Activated B cell treated with CpG ODN at 0.5 μM for 24 hours (primary cell): ENCODE measurements at regions of chrX and their contacts with region 1.

Region 1: DNA sequence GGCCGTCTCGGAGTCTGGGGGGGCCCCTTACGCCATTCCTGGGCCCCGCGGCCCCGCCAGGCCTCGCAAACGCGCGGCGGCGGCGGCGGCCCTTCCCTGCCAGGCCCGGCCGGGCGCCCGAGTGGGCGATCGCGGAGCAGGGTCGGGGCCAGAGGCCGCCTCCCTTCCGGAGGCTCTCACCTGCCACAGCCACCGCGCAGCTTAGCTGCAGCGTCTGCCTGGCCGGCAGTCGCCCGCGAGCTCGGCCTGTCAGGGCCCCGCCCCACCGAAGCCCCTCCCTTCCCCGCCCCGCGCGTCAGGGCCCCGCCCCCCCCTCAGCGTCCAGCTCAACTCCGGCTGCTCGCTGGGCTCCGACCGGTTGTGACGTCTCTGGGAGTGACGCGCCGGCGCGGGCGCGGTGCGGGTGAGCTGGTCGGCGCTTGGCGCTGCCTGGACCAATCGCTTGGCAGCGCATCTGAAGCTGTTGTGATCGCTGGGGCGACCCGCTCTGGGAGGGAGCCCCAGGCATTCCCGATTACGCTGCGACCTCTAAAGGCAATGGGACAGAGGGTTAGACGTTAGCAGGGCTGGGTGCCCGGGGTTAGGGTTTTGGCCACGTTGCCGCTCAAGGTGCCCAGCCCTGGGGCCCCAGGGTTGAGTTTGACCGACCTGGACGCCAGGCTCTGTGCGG is at the start of gene SLC10A3:
- DNase-seq: peak; percentile 77
- ATAC-seq: peak; percentile 82
- H3K4me3 Mint-ChIP-seq: peak within 1 kb of the TSS; percentile 88
- H3K27ac Mint-ChIP-seq: peak within 1 kb of the TSS; percentile 93
- H3K4me1 Mint-ChIP-seq: peaks cover 10% of the 10 kb centered on the region
- H3K27me3 Mint-ChIP-seq: no peaks in the 10 kb centered on the region
- CTCF ChIP-seq: no peak
- total RNA-seq, gene SLC10A3: 13.4 and 17.1 TPM in 2 replicates

Region 2: DNA sequence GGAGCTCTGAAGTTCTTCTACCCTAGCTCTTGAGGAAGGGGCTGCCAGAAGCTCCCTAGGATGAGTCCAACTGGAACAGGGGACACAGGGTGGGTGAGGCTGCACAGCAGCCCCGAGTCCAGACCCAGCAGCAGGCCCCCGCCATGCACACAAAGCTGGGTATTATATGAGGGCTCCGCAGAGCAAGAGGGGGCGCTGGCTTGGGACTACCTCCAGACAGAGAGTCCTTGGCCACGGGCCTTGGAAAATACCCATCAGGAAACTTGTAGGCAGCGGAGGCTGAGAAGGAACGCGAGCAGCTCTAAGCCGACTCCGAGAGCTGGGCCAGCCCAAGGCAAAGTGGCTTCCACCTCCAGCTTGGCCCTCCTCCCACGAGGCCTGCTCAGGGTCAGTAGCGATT is 527.0 kb before region 1 on chrX:
- CTCF ChIA-PET with region 1: no interaction called
- POLR2A ChIA-PET with region 1: no interaction called
- intact Hi-C with region 1: no loop called
- DNase-seq: no peak
- ATAC-seq: no peak
- H3K4me3 Mint-ChIP-seq: no peak overlapping the region
- H3K27ac Mint-ChIP-seq: no peak overlapping the region
- H3K4me1 Mint-ChIP-seq: peaks cover 41% of the 10 kb centered on the region
- H3K27me3 Mint-ChIP-seq: no peaks in the 10 kb centered on the region
- CTCF ChIP-seq: no peak

Region 3: DNA sequence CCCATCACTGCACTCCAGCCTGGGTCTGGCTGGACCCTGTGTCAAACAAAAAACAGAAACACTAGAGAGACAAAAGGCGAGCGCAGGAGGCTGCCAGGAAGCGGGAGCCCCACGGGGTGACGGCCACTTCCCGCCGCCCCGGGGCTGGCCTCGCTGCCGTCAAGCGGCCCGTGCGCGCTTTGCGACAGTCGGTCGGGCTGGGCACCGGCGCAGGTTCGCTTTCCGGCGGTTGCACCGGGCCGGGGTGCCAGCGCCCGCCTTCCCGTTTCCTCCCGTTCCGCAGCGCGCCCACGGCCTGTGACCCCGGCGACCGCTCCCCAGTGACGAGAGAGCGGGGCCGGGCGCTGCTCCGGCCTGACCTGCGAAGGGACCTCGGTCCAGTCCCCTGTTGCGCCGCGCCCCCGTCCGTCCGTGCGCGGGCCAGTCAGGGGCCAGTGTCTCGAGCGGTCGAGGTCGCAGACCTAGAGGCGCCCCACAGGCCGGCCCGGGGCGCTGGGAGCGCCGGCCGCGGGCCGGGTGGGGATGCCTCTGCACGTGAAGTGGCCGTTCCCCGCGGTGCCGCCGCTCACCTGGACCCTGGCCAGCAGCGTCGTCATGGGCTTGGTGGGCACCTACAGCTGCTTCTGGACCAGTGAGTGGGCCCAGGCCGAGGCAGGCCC is 79.1 kb before region 1 on chrX and contains the start of gene TAFAZZIN:
- CTCF ChIA-PET with region 1: no interaction called
- POLR2A ChIA-PET with region 1: interaction called, 18 read pairs
- intact Hi-C with region 1: no loop called
- DNase-seq: peak; percentile 60
- ATAC-seq: peak; percentile 69
- H3K4me3 Mint-ChIP-seq: peak within 1 kb of the TSS; percentile 88
- H3K27ac Mint-ChIP-seq: peak within 1 kb of the TSS; percentile 87
- H3K4me1 Mint-ChIP-seq: peaks cover 24% of the 10 kb centered on the region
- H3K27me3 Mint-ChIP-seq: no peaks in the 10 kb centered on the region
- CTCF ChIP-seq: no peak
- total RNA-seq, gene TAFAZZIN: 50.5 and 66.1 TPM in 2 replicates

Region 4: DNA sequence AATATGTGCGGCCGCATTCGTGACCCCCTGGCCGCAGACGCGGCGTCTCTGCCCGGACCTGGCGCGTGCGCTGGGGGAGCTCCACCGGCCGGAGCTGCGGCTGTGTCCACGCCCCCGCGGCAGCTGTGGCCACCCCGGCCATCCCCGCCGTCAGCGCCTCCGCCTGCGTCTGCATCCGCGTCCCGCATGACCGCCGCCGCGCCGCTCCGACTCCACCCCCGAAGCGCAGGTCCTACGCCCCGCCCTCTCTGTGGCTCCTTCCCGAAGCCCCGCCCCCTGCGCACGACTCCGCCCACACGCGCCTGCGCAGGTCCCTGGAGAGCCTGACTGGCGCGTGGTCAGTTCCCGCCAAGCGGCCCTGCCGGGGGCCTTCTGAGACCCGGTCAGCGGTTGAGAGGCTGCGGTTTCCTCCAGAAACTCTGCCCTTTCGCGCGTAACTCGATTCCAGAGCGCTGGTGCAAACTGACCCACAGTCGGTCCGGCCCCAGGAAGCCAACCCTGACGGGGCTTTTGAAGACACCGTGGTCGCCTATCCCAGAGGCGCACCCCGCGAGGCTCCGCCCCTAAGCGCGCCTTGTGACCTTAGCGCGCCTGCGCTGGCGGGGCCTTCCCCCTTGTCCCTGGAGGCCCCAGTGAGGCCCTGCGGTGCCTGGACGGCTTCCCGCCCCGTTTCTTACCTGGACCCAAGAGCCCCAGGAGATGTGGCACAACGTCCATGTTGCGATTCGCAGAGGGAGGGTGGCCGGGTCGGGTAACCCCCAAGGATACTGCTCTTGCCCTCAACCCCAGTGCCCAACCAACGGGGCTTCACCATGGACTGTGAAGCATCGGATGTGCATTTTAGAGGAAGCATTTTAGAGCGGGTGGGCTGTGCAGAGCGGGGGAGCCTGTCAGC is 11.6 kb before region 1 on chrX and contains the start of gene LAGE3:
- CTCF ChIA-PET with region 1: no interaction called
- POLR2A ChIA-PET with region 1: interaction called, 12 read pairs
- intact Hi-C with region 1: loop called (anchors 1 kb)
- DNase-seq: peak; percentile 95
- ATAC-seq: peak; percentile 90
- H3K4me3 Mint-ChIP-seq: peak within 1 kb of the TSS; percentile 80
- H3K27ac Mint-ChIP-seq: peak within 1 kb of the TSS; percentile 88
- H3K4me1 Mint-ChIP-seq: peaks cover 23% of the 10 kb centered on the region
- H3K27me3 Mint-ChIP-seq: no peaks in the 10 kb centered on the region
- CTCF ChIP-seq: no peak
- total RNA-seq, gene LAGE3: 16.6 and 18.9 TPM in 2 replicates

Region 5: GRCh38 chrX:154526901-154527675 is 36.5 kb after region 1 on chrX:
- CTCF ChIA-PET with region 1: no interaction called
- POLR2A ChIA-PET with region 1: interaction called, 13 read pairs
- intact Hi-C with region 1: no loop called
- DNase-seq: peak; percentile 44
- ATAC-seq: peak; percentile 90
- H3K4me3 Mint-ChIP-seq: peak overlapping the region; percentile 68
- H3K27ac Mint-ChIP-seq: peak overlapping the region; percentile 76
- H3K4me1 Mint-ChIP-seq: peaks cover 14% of the 10 kb centered on the region
- H3K27me3 Mint-ChIP-seq: no peaks in the 10 kb centered on the region
- CTCF ChIP-seq: no peak